SK-N-SH (cell line): ENCODE measurements at regions of chr12 and their contacts with region 1.

Region 1: DNA sequence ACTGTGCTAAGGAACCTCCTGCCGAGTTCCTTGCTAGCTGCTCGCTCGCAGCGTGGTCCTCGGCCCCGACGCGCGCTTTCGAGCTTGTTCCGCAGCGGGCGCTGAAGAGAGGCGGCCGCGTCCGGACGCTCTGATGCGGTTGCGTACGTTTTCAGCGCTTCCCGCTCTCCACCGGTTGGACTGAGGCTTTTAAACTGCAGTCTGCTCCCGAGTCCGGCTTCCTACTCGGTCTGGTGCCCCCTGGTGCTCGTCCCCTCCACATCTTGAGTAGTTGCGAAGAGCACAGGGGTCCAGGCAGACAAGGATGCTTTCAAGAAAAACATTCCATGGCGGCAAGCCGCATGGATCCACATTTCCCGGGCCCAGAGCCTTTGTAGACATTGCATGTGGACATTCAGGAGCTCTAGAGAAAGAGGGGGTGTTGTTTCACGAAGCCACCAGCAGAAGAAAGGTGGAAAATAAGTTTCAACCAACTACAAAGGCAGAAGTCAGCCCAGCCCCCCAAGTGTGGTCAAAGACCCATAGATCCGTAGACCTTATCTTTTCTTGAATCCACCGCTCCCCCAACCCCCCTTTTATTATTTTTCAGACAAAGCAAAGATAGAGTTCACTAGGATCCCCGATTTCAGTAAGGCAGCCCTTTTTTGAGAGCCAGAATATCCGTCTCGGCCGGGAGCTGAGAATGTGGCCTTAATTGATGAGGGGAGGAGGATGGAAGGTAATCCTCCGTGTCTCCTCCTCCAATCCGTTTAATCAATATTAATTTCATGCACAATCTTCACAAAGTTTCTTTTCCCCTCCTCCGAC is 984 bp upstream of the WNK1 start:
- DNase-seq: peak; percentile 86
- H3K4me3 ChIP-seq: peak overlapping the region; percentile 58 to 78
- H3K27ac ChIP-seq: peak overlapping the region; percentile 86 to 99
- H3K4me1 ChIP-seq: peaks cover 8 to 14% of the 10 kb centered on the region in 2 experiments; a peak in 3 of 4 replicates
- H3K27me3 ChIP-seq: no peaks in the 10 kb centered on the region
- CTCF ChIP-seq: peak; percentile 82
- EP300 ChIP-seq: no peak; a peak in 1 of 4 replicates
- RAD21 ChIP-seq: peak; percentile 80

Region 2: DNA sequence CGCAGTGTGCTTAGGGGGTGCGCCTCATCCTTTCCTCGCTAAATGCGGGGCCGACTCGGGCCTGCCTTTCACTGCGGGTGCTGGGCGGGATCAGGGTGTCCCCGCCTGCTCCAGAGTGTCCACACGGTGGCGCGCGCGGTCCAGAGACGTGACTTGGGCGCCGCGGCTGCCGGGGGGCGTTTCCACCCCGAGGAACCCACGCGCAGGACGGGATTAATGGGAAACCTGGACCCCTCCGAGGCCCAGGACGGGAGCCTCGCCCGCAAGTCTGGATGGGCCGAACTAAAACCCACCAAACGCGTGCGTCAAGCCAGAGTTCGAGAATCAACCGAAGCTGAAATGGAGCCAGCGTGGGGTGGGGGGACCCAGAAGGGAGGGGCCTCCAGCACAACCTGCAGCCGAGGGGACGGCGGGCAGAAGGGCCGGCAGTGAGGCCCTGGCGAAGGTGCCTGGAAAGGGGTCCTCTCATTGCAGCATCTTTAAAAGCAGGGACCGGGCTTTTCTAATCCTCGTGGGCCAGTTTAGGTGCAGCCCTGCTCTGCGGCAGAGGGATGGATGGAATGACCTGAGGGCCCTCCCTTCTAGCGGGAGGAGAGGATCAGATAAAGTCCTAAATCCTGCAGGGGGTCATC is 181.5 kb before region 1 on chr12:
- CTCF ChIA-PET with region 1: interaction called, 136 read pairs
- POLR2A ChIA-PET with region 1: interaction called, 17 read pairs
- DNase-seq: peak; percentile 98
- H3K4me3 ChIP-seq: peak overlapping the region; percentile 62 to 88
- H3K27ac ChIP-seq: peak overlapping the region; percentile 75 to 76
- H3K4me1 ChIP-seq: peaks cover 0 to 24% of the 10 kb centered on the region in 2 experiments; a peak in 2 of 4 replicates
- H3K27me3 ChIP-seq: no peaks in the 10 kb centered on the region
- CTCF ChIP-seq: peak; percentile 92
- EP300 ChIP-seq: no peak
- RAD21 ChIP-seq: peak; percentile 88

Region 3: DNA sequence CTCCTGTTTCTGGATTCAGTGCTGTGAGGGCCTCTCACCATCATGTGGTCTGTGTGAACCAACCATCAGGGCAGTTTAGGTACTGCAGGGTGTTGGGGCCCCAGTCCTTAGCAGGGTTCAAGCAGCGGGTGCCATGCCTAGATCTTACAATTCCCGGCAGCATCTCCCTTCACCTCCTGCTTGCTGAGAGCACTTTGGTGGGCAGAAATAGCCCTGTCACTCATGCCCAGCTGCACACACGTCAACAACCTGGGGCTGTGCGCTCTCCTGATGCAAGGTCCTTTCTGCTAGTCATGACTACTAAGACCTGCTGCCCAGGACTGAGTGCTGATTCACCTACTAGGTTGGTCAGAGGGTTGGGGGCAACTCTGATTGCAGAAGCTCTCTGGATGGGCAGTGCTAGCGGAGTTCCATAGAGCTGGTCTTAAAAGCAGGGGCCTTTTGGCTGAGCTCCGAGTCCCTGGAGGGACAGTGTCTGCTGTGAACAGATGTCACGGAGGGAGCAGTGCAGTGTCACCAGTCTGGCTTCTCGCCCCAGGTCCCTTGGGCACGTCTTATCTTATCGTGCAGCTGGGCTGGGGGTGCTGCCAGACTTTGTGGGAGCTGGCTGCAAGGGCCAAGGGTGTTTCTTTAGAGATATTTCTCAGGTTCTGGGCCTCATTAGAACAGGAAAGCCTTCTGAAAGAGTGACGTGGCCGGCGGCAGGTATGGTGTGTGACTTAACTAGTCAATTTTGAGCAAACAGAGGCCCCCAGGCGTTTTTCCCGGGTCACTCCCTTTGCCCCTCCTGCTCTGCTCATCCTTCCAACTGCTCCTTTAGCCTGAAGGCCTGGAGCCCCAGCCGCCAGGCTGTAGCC is 160.0 kb before region 1 on chr12:
- CTCF ChIA-PET with region 1: interaction called, 40 read pairs
- POLR2A ChIA-PET with region 1: interaction called, 16 read pairs
- DNase-seq: peak; percentile 89
- H3K4me3 ChIP-seq: no peak overlapping the region; a peak in 1 of 4 replicates
- H3K27ac ChIP-seq: peak overlapping the region in 1 of 2 experiments; percentile 97; a peak in 3 of 4 replicates
- H3K4me1 ChIP-seq: peaks cover 0 to 26% of the 10 kb centered on the region in 2 experiments; a peak in 2 of 4 replicates
- H3K27me3 ChIP-seq: no peaks in the 10 kb centered on the region; the same call in 1 of the 2 replicates
- CTCF ChIP-seq: no peak
- EP300 ChIP-seq: peak in 1 of 2 experiments; percentile 93; a peak in 2 of 4 replicates
- RAD21 ChIP-seq: peak; percentile 39; the same call in 1 of the 2 replicates

Region 4: GRCh38 chr12:614411-614970 is 136.9 kb before region 1 on chr12:
- CTCF ChIA-PET with region 1: interaction called, 34 read pairs
- POLR2A ChIA-PET with region 1: no interaction called
- DNase-seq: peak; percentile 73
- H3K4me3 ChIP-seq: no peak overlapping the region
- H3K27ac ChIP-seq: no peak overlapping the region
- H3K4me1 ChIP-seq: peaks cover 5 to 20% of the 10 kb centered on the region in 2 experiments; a peak in 2 of 4 replicates
- H3K27me3 ChIP-seq: no peaks in the 10 kb centered on the region
- CTCF ChIP-seq: peak; percentile 35
- EP300 ChIP-seq: no peak
- RAD21 ChIP-seq: peak; percentile 66

Region 5: DNA sequence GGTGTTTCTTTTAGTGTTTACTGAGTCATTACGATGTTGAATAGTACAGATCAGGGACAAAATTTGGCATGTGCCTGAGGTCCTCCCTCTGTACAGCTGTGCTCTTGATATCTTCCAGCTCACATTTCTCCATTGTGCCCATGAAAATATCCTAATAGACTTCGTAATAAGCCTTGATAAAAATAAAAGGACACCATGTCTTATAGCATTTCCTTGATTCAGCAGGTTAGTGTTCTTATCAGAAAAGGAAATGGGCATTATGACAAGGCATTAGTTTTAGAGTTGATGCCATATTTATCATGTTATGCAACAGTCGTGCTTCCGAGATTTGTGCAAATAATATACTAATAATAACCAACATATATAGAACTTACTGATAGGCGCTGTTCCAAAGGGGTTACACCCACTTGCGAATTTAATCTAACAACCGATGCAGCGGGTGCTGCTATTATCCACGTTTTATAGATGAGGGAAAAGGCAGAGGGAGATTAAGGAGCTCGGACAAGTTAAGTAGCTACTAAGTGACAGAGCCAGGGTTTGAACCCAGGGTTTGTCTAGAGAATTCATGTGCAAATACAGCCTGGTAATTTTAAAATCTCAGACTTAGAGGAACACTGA is 14.2 kb before region 1 on chr12:
- CTCF ChIA-PET with region 1: interaction called, 29 read pairs
- POLR2A ChIA-PET with region 1: interaction called, 4 read pairs
- DNase-seq: no peak
- H3K4me3 ChIP-seq: no peak overlapping the region
- H3K27ac ChIP-seq: no peak overlapping the region
- H3K4me1 ChIP-seq: no peaks in the 10 kb centered on the region
- H3K27me3 ChIP-seq: no peaks in the 10 kb centered on the region
- CTCF ChIP-seq: no peak
- EP300 ChIP-seq: no peak
- RAD21 ChIP-seq: no peak

Region 6: GRCh38 chr12:810671-811415 is 59.4 kb after region 1 on chr12:
- CTCF ChIA-PET with region 1: interaction called, 66 read pairs
- POLR2A ChIA-PET with region 1: interaction called, 4 read pairs
- DNase-seq: no peak
- H3K4me3 ChIP-seq: no peak overlapping the region
- H3K27ac ChIP-seq: no peak overlapping the region
- H3K4me1 ChIP-seq: peaks cover 2 to 25% of the 10 kb centered on the region in 2 experiments
- H3K27me3 ChIP-seq: no peaks in the 10 kb centered on the region
- CTCF ChIP-seq: no peak
- EP300 ChIP-seq: no peak
- RAD21 ChIP-seq: no peak

Region 7: DNA sequence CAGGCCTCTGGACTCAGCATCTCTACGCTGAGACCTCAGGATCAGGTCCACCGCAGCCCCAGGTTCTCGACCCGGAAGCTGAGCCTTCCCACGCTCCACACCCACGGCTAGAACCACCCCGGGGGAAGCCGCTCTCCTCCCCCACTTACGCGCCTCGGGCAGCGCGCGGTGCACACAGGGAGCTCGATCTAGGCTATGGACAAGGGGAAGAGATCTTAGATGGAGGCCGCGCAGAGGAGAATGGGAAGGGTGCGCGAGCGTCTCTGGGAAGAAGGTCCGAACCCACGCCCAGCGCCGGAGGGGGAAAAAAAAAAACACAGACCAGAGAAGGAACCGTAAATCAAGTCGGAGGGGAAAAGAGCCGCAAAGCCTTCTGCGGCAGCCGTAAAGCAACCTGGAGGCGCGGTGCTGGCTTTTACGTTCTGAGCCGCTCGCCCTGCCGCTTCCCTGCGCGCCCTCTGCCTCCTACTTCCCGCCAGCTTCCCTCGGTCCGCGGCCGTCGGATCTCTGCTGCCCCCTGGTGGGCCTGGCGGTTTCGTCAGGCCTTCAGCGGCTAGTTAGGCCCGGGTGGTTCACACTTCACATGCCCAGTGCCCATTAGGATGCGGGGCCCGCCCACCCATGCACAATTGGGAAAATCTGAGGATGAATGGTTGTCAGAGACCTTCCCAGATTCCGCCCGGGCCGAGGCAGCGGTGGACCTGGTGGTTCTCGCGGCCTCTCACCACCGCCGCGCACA is 198.2 kb after region 1 on chr12 and contains the start of gene RAD52:
- CTCF ChIA-PET with region 1: interaction called, 13 read pairs
- POLR2A ChIA-PET with region 1: interaction called, 9 read pairs
- DNase-seq: peak; percentile 91
- H3K4me3 ChIP-seq: peak within 1 kb of the TSS; percentile 69 to 94
- H3K27ac ChIP-seq: peak within 1 kb of the TSS; percentile 95
- H3K4me1 ChIP-seq: peaks cover 2 to 6% of the 10 kb centered on the region in 2 experiments; a peak in 3 of 4 replicates
- H3K27me3 ChIP-seq: no peaks in the 10 kb centered on the region
- CTCF ChIP-seq: peak; percentile 91
- EP300 ChIP-seq: peak; percentile 18 to 69; a peak in 1 of 4 replicates
- RAD21 ChIP-seq: peak; percentile 79
- polyA plus RNA-seq, gene RAD52: 11.2 and 12.1 TPM in 2 replicates

Region 8: GRCh38 chr12:1083889-1084262 is 332.5 kb after region 1 on chr12:
- CTCF ChIA-PET with region 1: no interaction called
- POLR2A ChIA-PET with region 1: no interaction called
- DNase-seq: peak; percentile 62
- H3K4me3 ChIP-seq: no peak overlapping the region; a peak in 2 of 4 replicates
- H3K27ac ChIP-seq: peak overlapping the region; percentile 87
- H3K4me1 ChIP-seq: peaks cover 0 to 15% of the 10 kb centered on the region in 2 experiments; a peak in 3 of 4 replicates
- H3K27me3 ChIP-seq: no peaks in the 10 kb centered on the region
- CTCF ChIP-seq: no peak
- EP300 ChIP-seq: 0 out of 4 replicates have a peak, but pooled peaks of 1 of the 2 experiments have one; percentile 1
- RAD21 ChIP-seq: no peak